ENCODE measurements at regions of chr5 and their contacts with region 1.

Region 1: DNA sequence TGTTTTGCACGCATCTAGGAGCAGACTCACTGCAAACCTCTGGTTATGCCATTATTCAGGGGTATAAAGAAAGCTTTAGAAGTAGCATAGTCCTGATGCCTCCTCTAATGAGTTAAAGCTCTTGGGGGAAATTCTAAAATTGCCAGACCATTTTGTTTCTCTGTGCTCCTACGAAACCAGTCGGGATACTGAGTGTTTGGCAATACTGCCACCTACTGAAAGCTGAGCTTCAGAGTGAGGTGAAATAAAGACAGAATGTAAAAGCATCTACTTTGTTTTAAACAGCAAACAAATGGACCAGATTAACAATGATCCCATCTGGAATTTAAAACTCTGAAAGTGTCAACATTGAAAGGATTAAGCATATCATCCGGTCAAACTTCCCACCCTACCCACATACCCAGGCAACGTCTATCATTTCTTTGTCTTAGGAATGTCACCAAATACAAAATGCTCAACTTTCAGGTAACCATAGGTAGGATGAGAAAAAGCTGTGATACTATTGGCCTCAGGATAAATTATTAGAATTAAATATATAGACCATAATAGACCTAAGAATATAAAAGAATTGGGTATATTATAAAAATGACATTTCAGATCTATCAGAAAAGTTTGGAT is 77.8 kb upstream of the SHISAL2B start:
- DNase-seq: peak; percentile 41
- H3K4me3 ChIP-seq: no peak overlapping the region
- H3K27ac ChIP-seq: no peak overlapping the region
- H3K4me1 ChIP-seq: no peaks in the 10 kb centered on the region
- CTCF ChIP-seq: peak; percentile 89

Region 2: GRCh38 chr5:64074533-64074932 is 537.9 kb before region 1 on chr5:
- CTCF ChIA-PET with region 1: no interaction called
- POLR2A ChIA-PET with region 1: no interaction called
- intact Hi-C with region 1: loop called (anchors 10 kb)
- DNase-seq: peak; percentile 26
- H3K4me3 ChIP-seq: no peak overlapping the region
- H3K27ac ChIP-seq: no peak overlapping the region
- H3K4me1 ChIP-seq: no peaks in the 10 kb centered on the region
- CTCF ChIP-seq: peak; percentile 78

Region 3: DNA sequence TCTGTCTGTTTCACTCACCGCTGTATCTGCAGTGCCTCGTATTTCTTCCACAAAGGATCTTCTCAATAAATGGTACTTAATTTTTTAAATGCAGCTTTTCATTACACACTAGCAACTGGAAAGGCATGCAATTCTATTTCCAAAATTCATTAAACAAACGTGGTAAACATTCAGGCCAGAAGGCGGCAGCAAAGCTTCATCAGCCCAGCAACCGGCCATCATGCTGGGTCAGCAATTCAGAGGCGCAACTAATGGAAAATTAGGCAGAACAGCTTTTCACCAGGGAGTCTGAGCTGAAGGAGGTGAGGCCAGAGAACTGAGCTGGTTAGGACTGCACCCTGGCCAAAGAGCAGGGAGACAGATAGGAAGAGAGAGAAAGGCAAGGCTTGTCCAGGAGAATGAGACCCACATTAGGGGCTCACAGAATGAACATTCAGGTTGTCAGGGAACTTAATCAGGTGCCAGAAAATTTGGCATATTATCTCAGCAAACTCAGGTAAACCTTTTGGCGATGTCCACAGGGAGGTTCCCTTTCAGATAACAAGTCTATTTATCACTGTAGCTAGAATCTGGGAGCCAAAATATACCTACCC is 464.5 kb before region 1 on chr5:
- CTCF ChIA-PET with region 1: no interaction called
- POLR2A ChIA-PET with region 1: no interaction called
- intact Hi-C with region 1: loop called (anchors 5 kb)
- DNase-seq: peak; percentile 10
- H3K4me3 ChIP-seq: no peak overlapping the region
- H3K27ac ChIP-seq: no peak overlapping the region
- H3K4me1 ChIP-seq: no peaks in the 10 kb centered on the region
- CTCF ChIP-seq: peak; percentile 76

Region 4: DNA sequence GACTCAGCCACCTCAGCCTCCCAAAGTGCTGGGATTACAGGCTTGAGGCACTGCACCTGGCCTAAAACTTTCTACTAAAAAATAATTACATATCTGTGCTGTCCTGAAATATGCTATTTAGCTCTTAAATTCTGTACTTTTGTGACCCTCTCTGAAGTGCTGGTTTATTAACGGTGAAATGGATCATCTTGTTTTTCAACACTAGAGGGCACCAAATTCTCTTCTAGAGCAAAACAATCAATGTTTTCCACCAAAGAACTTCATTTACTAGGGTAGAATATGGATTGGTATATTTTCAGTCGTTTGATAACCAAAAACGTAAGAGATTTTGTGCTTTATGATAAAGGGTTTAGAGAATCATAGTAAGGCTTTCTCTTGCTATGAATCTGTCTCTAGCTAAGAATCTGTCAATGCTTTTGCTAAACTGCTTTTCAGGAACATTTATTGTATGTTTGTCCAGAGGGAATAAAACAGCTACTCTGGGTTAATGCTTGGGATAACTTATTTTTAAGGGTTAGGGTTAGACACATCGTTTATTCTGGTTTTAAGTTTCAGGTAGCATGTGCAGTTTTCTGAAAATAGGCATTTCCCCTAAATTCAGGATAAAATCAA is 383.2 kb before region 1 on chr5:
- CTCF ChIA-PET with region 1: no interaction called
- POLR2A ChIA-PET with region 1: no interaction called
- intact Hi-C with region 1: loop called (anchors 5 kb)
- DNase-seq: peak; percentile 43
- H3K4me3 ChIP-seq: no peak overlapping the region
- H3K27ac ChIP-seq: no peak overlapping the region
- H3K4me1 ChIP-seq: no peaks in the 10 kb centered on the region
- CTCF ChIP-seq: peak; percentile 87

Region 5: GRCh38 chr5:64576250-64576649 is 36.2 kb before region 1 on chr5:
- CTCF ChIA-PET with region 1: no interaction called
- POLR2A ChIA-PET with region 1: no interaction called
- intact Hi-C with region 1: no loop called
- DNase-seq: no peak
- H3K4me3 ChIP-seq: no peak overlapping the region
- H3K27ac ChIP-seq: no peak overlapping the region
- H3K4me1 ChIP-seq: no peaks in the 10 kb centered on the region
- CTCF ChIP-seq: no peak

Region 6: DNA sequence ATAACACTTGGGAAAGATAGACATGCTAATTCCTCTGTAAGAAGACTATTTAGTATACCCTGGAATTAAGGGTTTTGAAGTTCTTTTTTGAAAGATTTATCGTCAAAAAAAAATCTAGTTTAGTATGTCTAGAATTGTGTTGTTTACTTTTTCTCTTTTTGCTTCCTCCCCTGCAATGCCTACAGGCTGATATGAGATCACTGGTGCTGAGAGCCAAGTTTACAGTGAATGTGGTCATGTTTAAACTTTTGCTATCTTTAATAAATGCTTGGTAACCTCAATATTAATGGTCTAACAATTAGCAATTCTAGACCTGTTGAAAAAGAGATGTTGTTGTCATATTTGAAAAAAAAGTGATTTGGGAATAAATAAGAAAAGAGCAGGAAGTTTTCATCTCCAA is 242.4 kb after region 1 on chr5:
- CTCF ChIA-PET with region 1: no interaction called
- POLR2A ChIA-PET with region 1: no interaction called
- intact Hi-C with region 1: no loop called
- DNase-seq: no peak
- H3K4me3 ChIP-seq: no peak overlapping the region
- H3K27ac ChIP-seq: no peak overlapping the region
- H3K4me1 ChIP-seq: no peaks in the 10 kb centered on the region
- CTCF ChIP-seq: no peak